Astrocyte of the cerebellum (primary cell): ENCODE measurements at regions of chr5 and their contacts with region 1.

Region 1: GRCh38 chr5:175649967-175650366 is 7.9 kb upstream of the HRH2 start:
- DNase-seq: no peak
- H3K4me3 ChIP-seq: no peak overlapping the region
- CTCF ChIP-seq: no peak

Region 2: DNA sequence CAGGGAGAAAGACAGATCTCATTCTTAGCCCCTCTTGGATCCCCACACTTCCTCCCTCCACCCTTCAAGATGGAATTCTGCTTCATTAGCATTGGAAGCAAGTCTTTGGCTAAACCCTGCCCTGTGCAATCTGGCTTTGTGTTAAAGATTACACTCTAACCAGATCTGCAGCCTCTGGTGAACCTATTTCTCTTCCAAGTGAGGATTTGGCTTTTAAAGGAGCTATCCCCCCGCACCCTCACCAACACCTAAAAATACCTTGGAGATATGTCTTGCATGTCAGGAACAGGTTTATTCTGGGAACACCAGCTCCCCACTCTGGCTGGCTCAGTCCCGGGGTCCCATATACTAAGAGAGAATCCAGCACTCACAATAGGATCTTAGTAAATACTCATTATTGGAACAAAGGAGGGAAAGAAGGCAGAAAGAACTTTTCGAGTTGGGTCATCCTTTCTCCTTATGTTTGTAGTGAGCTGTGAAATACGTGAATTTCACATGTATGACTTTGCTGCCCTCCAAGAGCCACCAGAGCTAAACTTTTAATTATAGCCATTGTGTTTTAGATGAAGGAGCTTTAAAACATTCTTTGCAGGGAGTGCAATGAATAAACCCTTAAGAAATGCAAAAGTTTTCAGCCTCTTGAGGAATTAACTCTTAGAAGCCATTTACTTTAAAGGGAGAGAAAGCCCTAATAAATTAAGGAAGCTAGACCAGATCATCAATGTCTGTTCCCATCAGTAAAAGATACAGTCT is 45.8 kb before region 1 on chr5:
- in situ Hi-C with region 1: no loop called
- DNase-seq: no peak
- H3K4me3 ChIP-seq: no peak overlapping the region
- CTCF ChIP-seq: no peak

Region 3: GRCh38 chr5:175614223-175614815 is 35.6 kb before region 1 on chr5:
- in situ Hi-C with region 1: loop called (anchors 5 kb)
- DNase-seq: no peak
- H3K4me3 ChIP-seq: no peak overlapping the region
- CTCF ChIP-seq: no peak

Region 4: DNA sequence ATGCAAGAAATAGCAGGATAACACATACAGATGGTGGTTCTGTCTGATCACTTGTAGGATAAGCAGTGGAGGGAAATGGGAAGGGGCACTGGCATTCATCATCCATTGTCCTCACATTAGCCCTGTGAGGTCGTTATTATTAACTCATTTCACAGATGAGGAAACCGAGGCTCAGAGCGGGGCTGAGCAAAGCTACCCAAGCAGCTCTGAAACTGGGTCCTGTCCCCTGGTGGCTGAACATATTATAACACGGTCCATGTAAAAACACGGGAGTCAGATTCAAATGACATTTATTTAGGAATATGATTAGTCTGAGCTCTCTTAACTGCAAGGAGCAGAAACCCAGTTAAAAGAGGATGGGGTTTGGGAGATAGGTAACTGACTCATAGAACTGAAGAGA is 51.0 kb after region 1 on chr5:
- in situ Hi-C with region 1: loop called (anchors 5 kb)
- DNase-seq: no peak
- H3K4me3 ChIP-seq: no peak overlapping the region
- CTCF ChIP-seq: peak; percentile 21